IMR-90 (cell line): ENCODE measurements at regions of chr18 and their contacts with region 1.

Region 1: GRCh38 chr18:55322178-55322735 is 265.7 kb downstream of the TCF4 start:
- DNase-seq: peak; percentile 96
- ATAC-seq: peak; percentile 59
- H3K4me3 ChIP-seq: peak overlapping the region; percentile 61
- H3K27ac ChIP-seq: peak overlapping the region; percentile 82
- H3K4me1 ChIP-seq: peaks cover 3% of the 10 kb centered on the region; the same call in 1 of the 2 replicates
- H3K27me3 ChIP-seq: no peaks in the 10 kb centered on the region
- CTCF ChIP-seq: 0 out of 2 replicates have a peak, but pooled peaks have one; percentile 14
- POLR2A ChIP-seq: 0 out of 2 replicates have a peak, but pooled peaks have one; percentile 21
- RAD21 ChIP-seq: no peak

Region 2: GRCh38 chr18:54679318-54680149 is 642.7 kb before region 1 on chr18:
- CTCF ChIA-PET with region 1: no interaction called
- POLR2A ChIA-PET with region 1: no interaction called
- dilution Hi-C with region 1: no loop called
- in situ Hi-C with region 1: no loop called
- intact Hi-C with region 1: loop called (anchors 10 kb)
- DNase-seq: peak; percentile 83
- ATAC-seq: peak; percentile 95
- H3K4me3 ChIP-seq: no peak overlapping the region
- H3K27ac ChIP-seq: no peak overlapping the region
- H3K4me1 ChIP-seq: no peaks in the 10 kb centered on the region
- H3K27me3 ChIP-seq: no peaks in the 10 kb centered on the region
- CTCF ChIP-seq: peak; percentile 84
- POLR2A ChIP-seq: no peak
- RAD21 ChIP-seq: peak; percentile 93

Region 3: DNA sequence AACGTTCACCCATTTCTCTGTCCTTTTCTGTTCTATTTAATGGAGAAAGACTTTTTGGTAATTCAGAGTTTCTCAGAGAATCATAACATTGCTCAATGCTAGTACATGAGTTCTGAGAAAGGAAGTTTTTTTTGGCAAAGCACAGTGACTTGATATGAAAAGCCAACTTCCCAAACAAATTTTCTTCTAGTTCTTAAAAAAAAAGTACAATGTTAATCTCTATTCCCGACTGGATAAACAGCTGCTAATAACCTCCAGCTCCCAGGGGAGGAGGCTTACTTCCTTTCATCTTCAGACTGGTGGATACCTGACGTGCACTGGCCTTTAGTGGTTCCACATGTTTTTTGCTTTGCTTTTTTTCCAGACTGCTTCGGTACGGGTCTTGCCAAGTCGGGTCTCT is 78.4 kb before region 1 on chr18:
- CTCF ChIA-PET with region 1: no interaction called
- POLR2A ChIA-PET with region 1: no interaction called
- dilution Hi-C with region 1: no loop called
- in situ Hi-C with region 1: no loop called
- intact Hi-C with region 1: loop called (anchors 2 kb)
- DNase-seq: peak; percentile 76
- ATAC-seq: peak; percentile 53
- H3K4me3 ChIP-seq: no peak overlapping the region
- H3K27ac ChIP-seq: no peak overlapping the region; the same call in 1 of the 2 replicates
- H3K4me1 ChIP-seq: peaks cover 13% of the 10 kb centered on the region
- H3K27me3 ChIP-seq: no peaks in the 10 kb centered on the region
- CTCF ChIP-seq: no peak
- POLR2A ChIP-seq: no peak
- RAD21 ChIP-seq: no peak

Region 4: DNA sequence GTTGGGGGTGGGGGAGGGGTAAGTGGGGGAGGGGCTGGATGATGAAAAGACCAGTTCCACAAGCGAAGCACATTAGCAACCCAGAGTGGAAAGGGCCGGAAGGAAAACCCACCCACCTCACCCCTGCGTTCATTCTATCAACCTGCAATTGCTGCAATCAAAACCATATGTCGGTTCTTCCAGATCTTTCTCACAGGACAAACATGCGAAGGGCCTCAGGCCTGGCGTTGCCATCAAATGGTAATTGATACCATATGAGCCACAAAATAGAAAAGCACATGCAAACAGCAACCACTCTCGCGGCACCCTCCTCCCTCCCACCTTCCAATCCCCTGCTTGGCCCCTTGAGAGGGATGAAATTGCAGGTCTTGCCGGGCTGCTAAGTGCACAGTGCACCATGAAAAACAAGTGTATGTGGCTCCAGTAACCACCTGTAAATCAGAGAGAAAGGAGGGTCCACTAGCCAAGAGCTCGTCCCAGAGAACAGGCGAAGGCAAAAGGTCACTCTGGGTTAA is 21.8 kb before region 1 on chr18:
- CTCF ChIA-PET with region 1: interaction called, 3 read pairs
- POLR2A ChIA-PET with region 1: interaction called, 12 read pairs
- dilution Hi-C with region 1: no loop called
- in situ Hi-C with region 1: no loop called
- intact Hi-C with region 1: no loop called
- DNase-seq: peak; percentile 37
- ATAC-seq: no peak
- H3K4me3 ChIP-seq: no peak overlapping the region
- H3K27ac ChIP-seq: no peak overlapping the region
- H3K4me1 ChIP-seq: peaks cover 12% of the 10 kb centered on the region
- H3K27me3 ChIP-seq: no peaks in the 10 kb centered on the region
- CTCF ChIP-seq: no peak
- POLR2A ChIP-seq: no peak
- RAD21 ChIP-seq: no peak

Region 5: GRCh38 chr18:55351980-55352714 is 29.9 kb after region 1 on chr18:
- CTCF ChIA-PET with region 1: no interaction called
- POLR2A ChIA-PET with region 1: interaction called, 16 read pairs
- dilution Hi-C with region 1: no loop called
- in situ Hi-C with region 1: no loop called
- intact Hi-C with region 1: no loop called
- DNase-seq: peak; percentile 16
- ATAC-seq: no peak
- H3K4me3 ChIP-seq: no peak overlapping the region
- H3K27ac ChIP-seq: no peak overlapping the region
- H3K4me1 ChIP-seq: peaks cover 8% of the 10 kb centered on the region
- H3K27me3 ChIP-seq: no peaks in the 10 kb centered on the region
- CTCF ChIP-seq: no peak
- POLR2A ChIP-seq: no peak
- RAD21 ChIP-seq: no peak

Region 6: DNA sequence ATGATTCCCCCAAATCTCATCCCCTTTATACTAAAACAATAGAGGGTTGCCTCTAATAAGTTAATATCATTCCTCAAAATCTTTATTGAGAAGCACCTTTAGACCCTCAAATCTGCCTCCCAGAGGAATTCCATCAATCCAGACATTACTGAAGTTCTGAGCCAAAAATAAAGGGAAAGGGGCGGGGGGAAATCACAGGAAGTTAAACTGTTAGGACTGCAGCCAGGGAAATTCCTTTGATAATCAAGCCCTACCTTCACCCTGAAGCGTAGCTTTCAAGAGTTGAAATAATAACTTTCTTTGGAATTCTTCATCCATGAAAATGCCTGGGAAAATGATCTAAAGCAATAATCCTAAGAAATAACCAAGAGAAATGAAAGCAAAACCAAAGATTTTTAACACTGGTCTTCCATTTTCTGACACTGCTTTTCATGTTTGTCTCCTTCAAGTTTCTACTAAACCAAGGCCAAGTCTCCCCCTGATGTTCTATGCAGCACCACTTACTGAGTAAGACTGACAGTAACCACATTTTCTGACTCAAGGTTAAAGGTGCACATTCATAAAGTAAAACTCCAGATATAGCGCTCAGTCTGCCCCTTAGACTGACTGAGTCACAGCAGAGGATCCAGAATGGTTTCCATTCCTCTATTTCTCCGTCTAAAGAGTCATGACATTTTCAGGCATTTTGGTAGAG is 187.5 kb after region 1 on chr18:
- CTCF ChIA-PET with region 1: no interaction called
- POLR2A ChIA-PET with region 1: no interaction called
- dilution Hi-C with region 1: no loop called
- in situ Hi-C with region 1: no loop called
- intact Hi-C with region 1: no loop called
- DNase-seq: peak; percentile 95
- ATAC-seq: peak; percentile 79
- H3K4me3 ChIP-seq: peak overlapping the region; percentile 34; the same call in 1 of the 2 replicates
- H3K27ac ChIP-seq: peak overlapping the region; percentile 46
- H3K4me1 ChIP-seq: peaks cover 10% of the 10 kb centered on the region; the same call in 1 of the 2 replicates
- H3K27me3 ChIP-seq: no peaks in the 10 kb centered on the region
- CTCF ChIP-seq: no peak
- POLR2A ChIP-seq: peak; percentile 56; the same call in 1 of the 2 replicates
- RAD21 ChIP-seq: peak; percentile 9

Region 7: DNA sequence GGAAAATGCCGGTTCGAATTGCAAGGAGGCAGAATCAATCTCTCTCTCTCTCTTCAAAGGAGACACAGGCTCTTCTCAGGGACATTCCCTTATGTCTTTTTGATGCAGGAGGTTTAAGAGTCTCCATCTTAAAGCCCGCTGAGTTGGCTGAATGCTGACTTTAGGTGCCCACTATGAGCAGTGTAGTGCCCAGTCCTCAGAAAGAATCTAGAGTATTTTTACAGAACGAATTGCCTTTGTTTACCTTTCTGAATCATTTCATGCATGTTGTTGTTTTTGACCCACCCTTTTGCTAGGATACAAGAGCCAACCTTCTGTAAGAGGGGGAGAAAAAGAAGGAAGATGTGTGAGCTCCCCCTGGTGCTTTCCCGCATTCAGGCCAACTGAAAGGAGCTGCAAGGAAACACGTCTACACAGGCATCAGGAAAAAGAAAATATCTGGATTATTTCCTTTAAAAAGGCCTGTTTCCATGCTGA is 459.3 kb after region 1 on chr18:
- CTCF ChIA-PET with region 1: no interaction called
- POLR2A ChIA-PET with region 1: no interaction called
- dilution Hi-C with region 1: no loop called
- in situ Hi-C with region 1: no loop called
- intact Hi-C with region 1: loop called (anchors 5 kb)
- DNase-seq: peak; percentile 77
- ATAC-seq: peak; percentile 63
- H3K4me3 ChIP-seq: no peak overlapping the region
- H3K27ac ChIP-seq: no peak overlapping the region
- H3K4me1 ChIP-seq: no peaks in the 10 kb centered on the region; the same call in 1 of the 2 replicates
- H3K27me3 ChIP-seq: no peaks in the 10 kb centered on the region
- CTCF ChIP-seq: peak; percentile 80
- POLR2A ChIP-seq: no peak
- RAD21 ChIP-seq: peak; percentile 87